ENCODE measurements at regions of chr1 and their contacts with region 1.

Region 1: DNA sequence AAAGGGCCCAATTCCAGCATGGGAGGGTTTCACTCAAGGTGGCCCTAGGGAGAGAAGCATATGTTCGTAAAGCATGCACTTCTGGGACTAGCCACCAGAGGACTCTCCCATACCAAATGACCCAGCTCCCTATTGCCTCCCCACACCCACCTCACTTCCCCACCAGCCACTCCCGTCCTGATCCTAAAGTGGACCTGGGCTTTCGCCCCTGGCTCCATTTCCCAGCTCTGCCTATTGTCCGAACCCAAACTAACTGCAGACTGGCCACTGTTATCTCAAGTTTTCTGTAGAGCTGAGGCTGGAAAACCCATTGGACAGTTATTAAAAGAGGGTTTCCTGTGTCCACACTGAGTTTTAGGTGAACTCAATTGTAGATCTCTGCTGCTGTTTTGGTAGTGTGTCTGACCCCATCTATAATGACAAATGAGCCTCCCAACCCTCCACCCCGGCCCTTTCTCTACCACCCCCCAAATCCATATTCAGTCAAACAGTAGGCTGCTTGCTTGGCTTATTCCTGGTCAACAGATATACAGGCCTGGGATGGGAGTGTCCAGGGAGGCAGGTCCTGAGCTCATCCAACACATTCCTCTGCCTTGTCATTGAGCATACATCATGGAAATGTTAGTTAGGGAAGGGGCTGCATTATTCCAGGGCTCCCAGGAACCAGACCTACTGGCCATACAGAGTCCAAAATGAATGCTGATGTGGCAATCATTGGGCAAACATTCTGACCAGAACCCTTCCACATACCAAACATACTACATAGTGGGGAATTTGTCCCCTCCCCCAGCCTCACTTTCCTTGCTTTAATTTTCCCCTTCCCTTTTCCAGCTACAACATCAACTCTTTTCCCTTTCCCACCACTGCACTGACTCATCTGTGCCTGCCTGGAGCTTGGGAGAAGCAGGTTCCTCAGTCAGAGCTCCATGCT is 59.2 kb downstream of the ABCA4 start:
- DNase-seq: no peak

Region 2: GRCh38 chr1:93000751-93001175 is 1061.0 kb before region 1 on chr1:
- intact Hi-C with region 1: no loop called
- DNase-seq: no peak

Region 3: DNA sequence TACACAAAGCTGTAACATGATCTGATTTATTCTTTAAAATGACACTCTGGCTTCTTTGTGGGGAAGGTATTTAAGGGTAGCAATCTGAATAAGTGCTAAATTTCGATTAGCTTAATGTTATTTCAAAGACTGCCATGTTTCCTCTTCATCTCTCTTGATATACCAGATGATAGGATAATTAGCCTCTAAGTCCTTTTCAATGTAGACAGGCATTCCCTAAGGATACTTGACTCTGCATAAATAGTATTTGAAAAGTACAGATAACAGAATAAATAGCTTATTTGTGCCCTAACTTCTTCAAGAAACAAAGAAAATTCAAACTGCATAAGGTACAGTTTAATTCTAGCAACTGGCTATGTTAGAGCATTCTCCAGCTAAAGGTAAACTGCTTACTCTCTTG is 129.4 kb after region 1 on chr1:
- intact Hi-C with region 1: loop called (anchors 5 kb)
- DNase-seq: no peak